HEK293 (cell line): ENCODE measurements at regions of chr7 and their contacts with region 1.

Region 1: GRCh38 chr7:135170274-135170997 is at the start of gene CYREN:
- H3K4me3 ChIP-seq: peak within 1 kb of the TSS; percentile 83
- H3K27ac ChIP-seq: peak within 1 kb of the TSS; percentile 89
- H3K4me1 ChIP-seq: no peaks in the 10 kb centered on the region
- CTCF ChIP-seq: peak; percentile 91

Region 2: DNA sequence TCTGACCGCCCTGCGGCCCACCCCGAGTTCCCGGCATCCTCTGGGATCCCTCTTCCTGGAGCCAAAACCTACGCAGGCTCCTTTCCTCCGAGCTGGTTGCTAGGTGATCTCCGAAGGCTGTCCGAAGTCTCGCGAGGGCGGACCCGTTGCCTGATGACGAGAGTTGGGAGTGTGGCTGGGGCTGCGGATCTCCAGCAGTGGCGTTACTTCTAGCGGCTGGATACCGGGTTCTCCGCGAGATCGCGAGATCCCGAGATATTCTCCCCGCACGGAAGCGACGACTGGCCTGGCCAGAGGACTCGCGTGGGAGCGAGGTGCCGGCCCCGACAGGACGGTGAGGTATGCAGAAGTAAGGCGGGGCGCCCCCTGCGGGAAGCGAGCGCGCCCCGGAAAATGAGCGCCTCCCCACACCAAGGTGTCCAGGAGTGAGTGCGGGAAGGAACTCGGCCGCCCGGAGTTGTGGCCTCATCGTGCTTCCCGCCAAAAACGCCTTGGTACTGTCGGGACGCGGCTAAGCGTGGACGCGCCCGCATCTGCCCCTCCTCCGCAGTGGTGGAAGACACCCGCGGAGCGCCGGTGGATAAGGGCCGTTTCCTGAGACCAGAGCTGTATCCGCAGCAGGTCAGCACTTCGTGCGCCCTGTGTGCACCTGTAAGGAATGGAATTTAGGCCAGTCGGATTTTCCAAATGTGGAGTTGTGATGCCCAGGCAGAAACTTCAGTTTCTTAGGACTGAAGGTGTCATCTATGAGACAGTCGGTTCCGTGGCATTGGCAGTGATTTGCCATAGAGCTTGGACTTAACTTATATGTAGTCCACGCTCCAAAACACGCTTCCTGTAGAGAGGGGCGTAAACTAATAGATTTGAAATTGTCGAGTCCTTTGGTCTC is 183.8 kb before region 1 on chr7 and contains the start of gene AGBL3:
- CTCF ChIA-PET with region 1: interaction called, 11 read pairs
- POLR2A ChIA-PET with region 1: no interaction called
- H3K4me3 ChIP-seq: peak within 1 kb of the TSS; percentile 81
- H3K27ac ChIP-seq: peak within 1 kb of the TSS; percentile 69
- H3K4me1 ChIP-seq: no peaks in the 10 kb centered on the region
- CTCF ChIP-seq: peak; percentile 98